Endothelial cell of umbilical vein (primary cell): ENCODE measurements at regions of chr11 and their contacts with region 1.

Region 1: DNA sequence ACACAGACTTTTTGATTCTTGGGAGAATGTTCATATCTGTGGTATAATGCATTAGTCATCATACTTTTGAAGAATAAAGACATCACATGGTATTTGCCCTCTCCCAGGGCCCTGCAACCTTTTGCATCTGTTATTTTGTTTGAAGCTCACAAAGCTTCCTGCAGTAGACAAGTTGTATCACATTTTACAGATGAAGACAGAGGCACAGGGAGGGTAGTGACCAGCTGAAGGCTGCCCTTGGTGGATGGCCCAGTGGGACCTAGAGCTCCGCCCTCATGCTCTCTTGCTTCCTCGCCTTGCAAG is 66.4 kb downstream of the UBASH3B start:
- DNase-seq: peak; percentile 70
- H3K4me3 ChIP-seq: no peak overlapping the region
- H3K27ac ChIP-seq: no peak overlapping the region
- H3K4me1 ChIP-seq: peaks cover 30% of the 10 kb centered on the region
- H3K27me3 ChIP-seq: no peaks in the 10 kb centered on the region
- CTCF ChIP-seq: no peak
- POLR2A ChIP-seq: no peak

Region 2: DNA sequence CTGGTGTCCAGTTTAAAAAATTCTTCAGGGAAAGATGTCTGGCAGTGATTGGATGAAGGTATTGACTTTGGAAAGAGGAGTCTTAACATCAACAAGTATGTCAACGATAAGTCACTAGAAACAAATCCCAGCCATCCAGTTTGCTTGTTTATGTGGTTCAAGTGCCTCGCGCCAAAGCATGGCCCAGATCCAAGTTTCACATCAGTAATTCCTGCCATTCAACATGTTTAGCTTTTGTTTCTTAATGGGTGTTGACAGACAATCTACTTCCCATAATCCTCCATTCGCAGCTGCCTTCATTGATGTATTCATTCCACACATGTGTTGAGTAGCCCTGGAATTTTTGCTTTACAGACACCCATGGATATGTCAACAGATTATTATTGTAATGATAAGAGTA is 11.4 kb after region 1 on chr11:
- CTCF ChIA-PET with region 1: interaction called, 4 read pairs
- POLR2A ChIA-PET with region 1: no interaction called
- dilution Hi-C with region 1: no loop called
- intact Hi-C with region 1: loop called (anchors 1 kb)
- DNase-seq: peak; percentile 99
- H3K4me3 ChIP-seq: no peak overlapping the region
- H3K27ac ChIP-seq: peak overlapping the region; percentile 69
- H3K4me1 ChIP-seq: peaks cover 59% of the 10 kb centered on the region
- H3K27me3 ChIP-seq: no peaks in the 10 kb centered on the region
- CTCF ChIP-seq: no peak
- POLR2A ChIP-seq: peak; percentile 20

Region 3: GRCh38 chr11:122772945-122773344 is 51.0 kb after region 1 on chr11:
- CTCF ChIA-PET with region 1: no interaction called
- POLR2A ChIA-PET with region 1: no interaction called
- dilution Hi-C with region 1: no loop called
- intact Hi-C with region 1: no loop called
- DNase-seq: no peak
- H3K4me3 ChIP-seq: no peak overlapping the region
- H3K27ac ChIP-seq: no peak overlapping the region
- H3K4me1 ChIP-seq: peaks cover 38% of the 10 kb centered on the region
- H3K27me3 ChIP-seq: no peaks in the 10 kb centered on the region
- CTCF ChIP-seq: no peak
- POLR2A ChIP-seq: no peak

Region 4: DNA sequence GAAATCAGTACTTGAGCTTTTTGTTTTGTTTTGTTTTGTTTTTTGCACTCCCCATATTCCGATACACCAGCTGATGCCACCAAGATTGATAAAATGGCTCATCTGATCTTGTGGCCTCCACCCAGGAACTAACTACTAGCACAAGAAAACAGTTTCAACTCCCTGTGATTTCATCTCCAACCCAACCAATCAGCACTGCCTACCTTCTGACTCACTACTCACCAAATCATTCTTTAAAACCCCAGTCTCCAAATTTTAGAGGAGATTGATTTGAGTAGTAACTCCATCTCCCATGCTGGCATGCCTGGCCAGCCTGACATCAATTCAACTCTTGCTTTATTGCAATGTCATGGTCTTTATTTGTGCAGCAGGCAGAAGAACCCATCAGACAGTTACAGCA is 100.3 kb after region 1 on chr11:
- CTCF ChIA-PET with region 1: no interaction called
- POLR2A ChIA-PET with region 1: no interaction called
- dilution Hi-C with region 1: no loop called
- intact Hi-C with region 1: no loop called
- DNase-seq: no peak
- H3K4me3 ChIP-seq: no peak overlapping the region
- H3K27ac ChIP-seq: no peak overlapping the region
- H3K4me1 ChIP-seq: no peaks in the 10 kb centered on the region
- H3K27me3 ChIP-seq: no peaks in the 10 kb centered on the region
- CTCF ChIP-seq: no peak
- POLR2A ChIP-seq: no peak